ENCODE measurements at regions of chr3 and their contacts with region 1.

Region 1: GRCh38 chr3:82133070-82133606 is 371.7 kb upstream of the GBE1 start:
- DNase-seq: peak; percentile 68
- ATAC-seq: peak; percentile 61
- H3K4me3 Mint-ChIP-seq: no peak overlapping the region
- H3K27ac Mint-ChIP-seq: no peak overlapping the region
- H3K4me1 Mint-ChIP-seq: no peaks in the 10 kb centered on the region
- H3K27me3 Mint-ChIP-seq: peaks cover 2% of the 10 kb centered on the region

Region 2: DNA sequence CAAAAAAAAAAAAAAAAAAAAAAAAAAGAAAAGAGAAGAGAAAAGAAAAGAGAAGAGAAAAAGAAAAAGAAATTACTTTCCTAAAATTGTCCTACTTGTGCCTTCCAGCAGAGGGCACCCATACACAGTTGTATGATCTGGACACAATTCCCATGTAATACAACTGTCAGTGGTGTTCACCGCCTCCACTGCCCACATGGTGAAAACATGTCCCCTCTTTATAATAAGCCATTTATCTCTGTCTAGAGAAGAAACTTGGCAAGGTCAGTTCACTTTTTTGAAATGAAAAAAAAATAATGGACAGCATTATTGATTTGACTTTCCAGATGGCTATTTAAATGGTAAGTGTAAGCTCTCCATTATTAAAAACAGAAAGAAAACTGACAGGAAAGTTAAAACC is 831.1 kb before region 1 on chr3:
- CTCF ChIA-PET with region 1: no interaction called
- POLR2A ChIA-PET with region 1: no interaction called
- intact Hi-C with region 1: loop called (anchors 5 to 10 kb)
- DNase-seq: peak; percentile 28
- ATAC-seq: no peak
- H3K4me3 Mint-ChIP-seq: no peak overlapping the region
- H3K27ac Mint-ChIP-seq: no peak overlapping the region
- H3K4me1 Mint-ChIP-seq: no peaks in the 10 kb centered on the region
- H3K27me3 Mint-ChIP-seq: no peaks in the 10 kb centered on the region

Region 3: GRCh38 chr3:81419228-81419627 is 713.9 kb before region 1 on chr3:
- CTCF ChIA-PET with region 1: no interaction called
- POLR2A ChIA-PET with region 1: no interaction called
- intact Hi-C with region 1: loop called in 1 of 2 experiments (anchors 2 kb)
- DNase-seq: no peak
- ATAC-seq: no peak
- H3K4me3 Mint-ChIP-seq: no peak overlapping the region
- H3K27ac Mint-ChIP-seq: no peak overlapping the region
- H3K4me1 Mint-ChIP-seq: no peaks in the 10 kb centered on the region
- H3K27me3 Mint-ChIP-seq: no peaks in the 10 kb centered on the region

Region 4: DNA sequence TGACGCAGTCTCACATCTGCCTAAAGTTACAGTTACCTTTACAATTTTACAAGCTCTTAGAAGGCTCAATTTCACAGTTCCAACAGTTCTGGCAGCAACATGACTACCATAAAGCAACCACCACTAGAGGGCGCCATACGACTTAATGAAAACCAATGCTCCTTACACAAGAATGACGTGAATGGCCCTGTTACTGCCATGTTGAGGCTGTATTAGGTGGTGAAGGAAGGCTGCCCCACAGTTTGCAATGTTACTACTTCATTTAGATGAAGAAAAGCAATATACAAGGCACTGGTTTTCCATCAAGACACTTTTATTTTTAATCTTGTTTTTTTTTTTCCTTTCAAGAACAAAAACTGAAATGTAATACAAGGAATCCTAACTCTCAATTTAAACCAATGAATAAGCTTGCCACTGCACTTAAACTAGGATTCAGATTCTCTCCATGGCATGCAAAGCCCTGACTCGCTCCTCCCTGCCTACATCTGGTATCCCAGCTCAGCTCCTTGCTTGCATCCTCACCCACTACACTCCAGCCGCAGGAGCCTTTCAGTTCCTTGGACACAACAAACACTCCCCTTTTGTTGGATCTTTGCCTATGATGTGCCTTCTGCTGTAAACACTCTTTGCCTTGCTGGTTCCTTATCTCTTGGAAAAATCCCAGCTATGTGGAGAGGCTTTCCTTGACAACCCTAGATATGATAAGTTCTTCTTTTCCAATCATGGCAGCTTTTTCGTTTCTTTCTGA is 642.4 kb before region 1 on chr3:
- CTCF ChIA-PET with region 1: interaction called, 3 read pairs
- POLR2A ChIA-PET with region 1: no interaction called
- intact Hi-C with region 1: loop called (anchors 1 to 2 kb)
- DNase-seq: peak; percentile 88
- ATAC-seq: peak; percentile 84
- H3K4me3 Mint-ChIP-seq: no peak overlapping the region
- H3K27ac Mint-ChIP-seq: no peak overlapping the region
- H3K4me1 Mint-ChIP-seq: no peaks in the 10 kb centered on the region
- H3K27me3 Mint-ChIP-seq: no peaks in the 10 kb centered on the region

Region 5: DNA sequence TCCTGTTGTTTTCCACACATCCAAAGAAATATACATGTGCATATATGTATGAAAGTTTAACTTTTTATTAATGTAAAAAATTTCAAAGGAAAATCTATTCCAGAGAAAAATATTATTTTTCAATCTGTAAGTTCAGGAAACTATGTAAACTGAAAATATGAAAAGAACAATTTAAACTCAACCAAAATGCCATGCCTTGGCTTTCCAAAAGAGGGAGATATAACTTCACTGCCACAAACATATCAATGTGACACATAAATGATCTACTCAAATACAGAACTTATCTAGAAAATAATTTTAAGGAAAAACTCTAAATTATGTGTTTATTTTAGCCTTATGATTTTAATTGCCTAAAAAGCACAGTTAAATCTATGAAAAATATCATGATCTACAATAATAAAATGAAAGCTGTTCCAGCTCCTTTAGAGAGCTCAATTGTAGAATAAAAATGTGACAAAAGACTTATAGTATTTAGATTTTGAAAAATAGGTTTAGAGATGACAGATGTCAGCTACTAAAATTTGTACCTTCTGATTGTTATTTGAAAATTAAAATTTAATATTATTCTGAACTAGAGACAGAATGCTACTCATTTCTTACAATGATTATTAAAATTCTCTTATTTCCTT is 466.5 kb before region 1 on chr3:
- CTCF ChIA-PET with region 1: interaction called, 5 read pairs
- POLR2A ChIA-PET with region 1: no interaction called
- intact Hi-C with region 1: loop called in 1 of 2 experiments (anchors 5 kb)
- DNase-seq: no peak
- ATAC-seq: no peak
- H3K4me3 Mint-ChIP-seq: no peak overlapping the region
- H3K27ac Mint-ChIP-seq: no peak overlapping the region
- H3K4me1 Mint-ChIP-seq: no peaks in the 10 kb centered on the region
- H3K27me3 Mint-ChIP-seq: no peaks in the 10 kb centered on the region

Measured in activated CD4-positive, alpha-beta T cell treated with anti-CD3 and anti-CD28 coated beads for 36 hours (primary cell).